PC-3 (cell line): ENCODE measurements at regions of chr12 and their contacts with region 1.

Region 1: GRCh38 chr12:53917126-53917653 is 21.4 kb upstream of the HOXC13 start:
- DNase-seq: no peak
- ATAC-seq: no peak
- H3K4me3 ChIP-seq: no peak overlapping the region
- H3K27ac ChIP-seq: no peak overlapping the region
- H3K4me1 ChIP-seq: no peaks in the 10 kb centered on the region
- H3K27me3 ChIP-seq: no peaks in the 10 kb centered on the region
- CTCF ChIP-seq: no peak

Region 2: DNA sequence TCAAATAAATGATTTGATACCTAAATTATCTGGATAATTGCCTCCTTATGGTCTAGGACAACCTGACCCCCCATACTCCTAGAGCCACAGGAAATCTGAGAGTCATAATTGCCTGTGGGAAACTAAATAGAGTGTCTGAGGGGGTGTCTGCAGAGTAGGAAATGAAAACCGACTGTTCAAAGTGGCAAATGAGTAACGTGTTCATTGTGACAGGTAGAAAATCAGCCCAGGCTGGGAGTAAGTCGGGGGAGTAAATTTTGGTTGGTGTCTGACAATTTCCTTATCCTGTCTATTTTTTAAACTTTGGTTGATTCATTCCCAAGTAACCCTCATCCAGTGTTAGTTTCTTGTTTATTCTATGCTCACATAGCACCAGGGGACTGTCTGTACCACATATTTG is 30.2 kb before region 1 on chr12:
- CTCF ChIA-PET with region 1: no interaction called
- POLR2A ChIA-PET with region 1: no interaction called
- intact Hi-C with region 1: loop called (anchors 5 kb)
- DNase-seq: no peak
- ATAC-seq: no peak
- H3K4me3 ChIP-seq: no peak overlapping the region
- H3K27ac ChIP-seq: no peak overlapping the region
- H3K4me1 ChIP-seq: no peaks in the 10 kb centered on the region
- H3K27me3 ChIP-seq: no peaks in the 10 kb centered on the region
- CTCF ChIP-seq: no peak

Region 3: GRCh38 chr12:53952871-53953734 is 35.9 kb after region 1 on chr12:
- CTCF ChIA-PET with region 1: no interaction called
- POLR2A ChIA-PET with region 1: no interaction called
- intact Hi-C with region 1: no loop called
- DNase-seq: peak; percentile 55
- ATAC-seq: peak; percentile 44
- H3K4me3 ChIP-seq: peak overlapping the region; percentile 54
- H3K27ac ChIP-seq: no peak overlapping the region
- H3K4me1 ChIP-seq: peaks cover 13% of the 10 kb centered on the region
- H3K27me3 ChIP-seq: no peaks in the 10 kb centered on the region
- CTCF ChIP-seq: no peak